ENCODE measurements at regions of chr1 and their contacts with region 1.

Region 1: GRCh38 chr1:107529502-107530149 is 388.8 kb downstream of the NTNG1 start:
- DNase-seq: no peak
- ATAC-seq: peak; percentile 95
- H3K4me3 Mint-ChIP-seq: no peak overlapping the region
- H3K27ac Mint-ChIP-seq: no peak overlapping the region
- H3K4me1 Mint-ChIP-seq: peaks cover 4% of the 10 kb centered on the region
- H3K27me3 Mint-ChIP-seq: no peaks in the 10 kb centered on the region
- CTCF ChIP-seq: peak; percentile 25

Region 2: DNA sequence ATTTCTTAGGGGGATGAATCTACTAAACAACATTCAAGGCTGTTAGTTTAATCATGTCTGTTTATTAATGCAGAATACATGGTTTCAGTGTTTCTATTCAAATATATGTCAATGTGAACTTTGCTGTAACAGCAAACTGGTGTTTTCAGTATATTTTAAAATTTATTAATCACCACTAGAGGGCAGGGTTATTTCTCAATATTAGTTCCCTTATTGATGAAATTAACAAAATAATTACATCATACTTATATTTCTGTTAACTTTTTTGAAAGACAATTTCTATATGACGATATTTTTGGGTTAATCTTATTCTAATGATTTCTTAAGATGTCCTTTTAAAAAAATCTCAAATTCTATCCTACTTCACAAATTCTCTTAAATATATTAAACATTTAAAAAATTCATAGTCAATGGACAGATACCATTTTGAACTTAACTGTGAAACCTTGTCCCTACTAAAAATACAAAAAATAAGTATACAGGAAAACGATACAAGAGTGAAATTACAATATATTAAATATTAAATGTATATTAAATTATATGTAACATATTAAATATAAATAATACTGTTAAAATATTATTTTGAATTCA is 1507.2 kb before region 1 on chr1:
- CTCF ChIA-PET with region 1: no interaction called
- POLR2A ChIA-PET with region 1: no interaction called
- intact Hi-C with region 1: loop called (anchors 2 kb)
- DNase-seq: no peak
- ATAC-seq: no peak
- H3K4me3 Mint-ChIP-seq: no peak overlapping the region
- H3K27ac Mint-ChIP-seq: no peak overlapping the region
- H3K4me1 Mint-ChIP-seq: no peaks in the 10 kb centered on the region
- H3K27me3 Mint-ChIP-seq: no peaks in the 10 kb centered on the region
- CTCF ChIP-seq: no peak

Region 3: GRCh38 chr1:107142140-107142542 is 387.5 kb before region 1 on chr1:
- CTCF ChIA-PET with region 1: interaction called, 4 read pairs
- POLR2A ChIA-PET with region 1: no interaction called
- intact Hi-C with region 1: loop called (anchors 2 kb)
- DNase-seq: no peak
- ATAC-seq: no peak
- H3K4me3 Mint-ChIP-seq: peak overlapping the region; percentile 86
- H3K27ac Mint-ChIP-seq: peak overlapping the region; percentile 68
- H3K4me1 Mint-ChIP-seq: peaks cover 23% of the 10 kb centered on the region
- H3K27me3 Mint-ChIP-seq: peaks cover 15% of the 10 kb centered on the region
- CTCF ChIP-seq: peak; percentile 99

Region 4: DNA sequence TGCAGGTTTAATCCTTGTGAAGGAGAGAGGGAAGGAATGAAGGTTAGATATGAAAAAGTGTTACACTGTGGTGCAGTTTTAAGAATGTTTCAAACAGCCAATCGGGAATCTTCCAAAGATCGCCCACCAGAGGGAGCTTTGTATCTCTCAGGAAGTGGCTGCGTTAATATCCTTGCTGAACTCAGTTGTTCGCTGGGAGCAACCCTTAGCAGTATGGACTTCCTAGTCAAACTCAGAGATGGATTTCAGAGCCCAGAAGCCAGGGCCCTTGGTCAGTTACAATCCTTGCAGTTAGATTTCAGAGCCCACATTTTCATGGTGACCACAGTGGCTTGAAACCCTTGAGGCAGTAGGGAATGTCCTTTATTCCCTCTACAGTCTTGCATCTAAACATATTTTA is 252.6 kb before region 1 on chr1:
- CTCF ChIA-PET with region 1: interaction called, 59 read pairs
- POLR2A ChIA-PET with region 1: no interaction called
- intact Hi-C with region 1: loop called (anchors 1 kb)
- DNase-seq: no peak
- ATAC-seq: no peak
- H3K4me3 Mint-ChIP-seq: no peak overlapping the region
- H3K27ac Mint-ChIP-seq: no peak overlapping the region
- H3K4me1 Mint-ChIP-seq: peaks cover 15% of the 10 kb centered on the region
- H3K27me3 Mint-ChIP-seq: no peaks in the 10 kb centered on the region
- CTCF ChIP-seq: no peak

Region 5: DNA sequence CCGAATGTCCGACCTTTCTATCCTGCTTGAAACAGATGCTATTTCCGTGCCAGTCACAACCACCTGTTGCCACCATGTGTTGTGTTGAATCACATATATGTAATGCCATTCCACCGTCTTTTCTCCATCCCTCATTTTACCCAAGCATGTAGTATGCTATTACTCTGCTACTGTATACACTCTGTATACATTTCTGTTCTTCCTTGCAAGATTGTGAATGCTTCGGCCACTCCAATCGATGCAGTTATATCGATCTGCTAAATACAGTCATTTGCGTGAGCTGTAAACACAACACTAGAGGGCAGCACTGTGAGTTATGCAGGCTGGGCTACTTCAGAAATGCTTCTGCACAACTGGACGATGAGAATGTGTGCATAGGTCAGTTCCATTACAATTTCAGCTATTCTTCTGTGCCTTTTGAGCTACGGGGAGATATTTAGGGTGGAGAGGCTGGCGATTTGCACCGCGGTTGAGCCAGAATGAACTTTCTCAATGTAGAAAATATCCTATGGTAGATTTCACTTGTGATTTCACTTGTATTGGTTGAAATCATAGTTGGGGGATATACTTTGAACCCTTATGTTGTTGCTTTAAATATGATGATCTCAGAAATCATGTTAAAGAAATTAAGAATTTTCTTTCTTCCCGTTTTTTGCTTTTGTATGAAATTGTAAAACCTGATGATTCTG is 98.9 kb before region 1 on chr1:
- CTCF ChIA-PET with region 1: interaction called, 147 read pairs
- POLR2A ChIA-PET with region 1: no interaction called
- intact Hi-C with region 1: loop called (anchors 1 kb)
- DNase-seq: no peak
- ATAC-seq: peak; percentile 59
- H3K4me3 Mint-ChIP-seq: no peak overlapping the region
- H3K27ac Mint-ChIP-seq: no peak overlapping the region
- H3K4me1 Mint-ChIP-seq: peaks cover 28% of the 10 kb centered on the region
- H3K27me3 Mint-ChIP-seq: no peaks in the 10 kb centered on the region
- CTCF ChIP-seq: peak; percentile 45

Region 6: DNA sequence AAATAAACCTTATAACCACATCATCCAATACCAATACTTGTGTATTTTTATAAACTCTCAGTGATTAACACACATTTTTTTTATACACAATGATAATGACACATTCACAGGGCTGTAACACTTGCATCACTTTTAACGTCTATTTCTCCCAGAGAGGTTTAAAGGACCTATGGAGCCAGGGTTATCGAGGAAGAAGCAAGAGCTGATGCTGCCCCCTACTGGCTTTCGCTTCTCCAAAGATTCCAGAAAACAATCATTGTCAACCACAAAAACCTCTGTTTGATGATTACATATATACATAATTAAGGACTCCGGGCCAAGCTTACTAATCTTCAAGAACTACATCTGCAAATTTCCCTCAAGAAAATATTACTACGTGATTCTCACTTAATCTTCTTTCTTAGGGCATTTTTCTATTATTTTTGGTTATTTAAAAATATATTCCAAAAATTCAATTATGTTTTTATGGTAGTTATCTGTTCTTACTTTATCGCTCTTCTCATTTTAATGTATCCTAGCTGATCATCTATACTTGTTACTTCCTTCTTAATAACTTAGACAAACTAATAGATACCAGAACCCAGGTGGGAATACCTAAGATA is 220.8 kb after region 1 on chr1:
- CTCF ChIA-PET with region 1: interaction called, 3 read pairs
- POLR2A ChIA-PET with region 1: no interaction called
- intact Hi-C with region 1: loop called (anchors 1 kb)
- DNase-seq: no peak
- ATAC-seq: no peak
- H3K4me3 Mint-ChIP-seq: no peak overlapping the region
- H3K27ac Mint-ChIP-seq: no peak overlapping the region
- H3K4me1 Mint-ChIP-seq: peaks cover 2% of the 10 kb centered on the region
- H3K27me3 Mint-ChIP-seq: no peaks in the 10 kb centered on the region
- CTCF ChIP-seq: no peak